Activated CD4-positive, alpha-beta memory T cell treated with anti-CD3 and anti-CD28 coated beads, Interleukin-2, amount 10 ng/mL, durations not matched to agents 7 days and 5 days (primary cell): ENCODE measurements at regions of chr10 and their contacts with region 1.

Region 1: GRCh38 chr10:27558612-27559020 is 54.5 kb downstream of the RAB18 start:
- DNase-seq: peak; percentile 45
- H3K4me3 Mint-ChIP-seq: no peak overlapping the region
- H3K27ac Mint-ChIP-seq: no peak overlapping the region
- H3K4me1 Mint-ChIP-seq: no peaks in the 10 kb centered on the region
- H3K27me3 Mint-ChIP-seq: no peaks in the 10 kb centered on the region

Region 2: DNA sequence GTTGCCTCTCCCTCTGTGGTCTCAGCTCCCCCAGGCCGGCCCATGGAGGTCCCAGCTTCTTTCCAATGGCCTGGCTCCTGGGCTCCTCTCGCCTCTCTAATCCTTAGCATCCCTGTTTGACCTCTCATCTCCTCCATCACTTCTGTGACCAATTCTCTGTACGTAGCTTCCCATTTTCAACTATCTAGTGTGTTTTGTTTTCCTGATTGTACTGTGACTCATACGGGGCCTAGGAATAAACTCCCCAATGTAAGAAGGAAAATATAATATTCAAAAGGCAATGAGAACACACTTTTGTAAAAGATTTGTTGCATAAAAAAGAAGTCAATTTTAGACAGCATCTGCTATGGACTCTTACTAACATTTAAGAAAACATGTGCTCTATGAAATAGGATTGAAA is 96.7 kb after region 1 on chr10:
- CTCF ChIA-PET with region 1: interaction called, 11 read pairs
- POLR2A ChIA-PET with region 1: no interaction called
- DNase-seq: no peak
- H3K4me3 Mint-ChIP-seq: no peak overlapping the region
- H3K27ac Mint-ChIP-seq: no peak overlapping the region
- H3K4me1 Mint-ChIP-seq: peaks cover 2% of the 10 kb centered on the region
- H3K27me3 Mint-ChIP-seq: peaks cover 2% of the 10 kb centered on the region